G401 (cell line): ENCODE measurements at regions of chr1 and their contacts with region 1.

Region 1: DNA sequence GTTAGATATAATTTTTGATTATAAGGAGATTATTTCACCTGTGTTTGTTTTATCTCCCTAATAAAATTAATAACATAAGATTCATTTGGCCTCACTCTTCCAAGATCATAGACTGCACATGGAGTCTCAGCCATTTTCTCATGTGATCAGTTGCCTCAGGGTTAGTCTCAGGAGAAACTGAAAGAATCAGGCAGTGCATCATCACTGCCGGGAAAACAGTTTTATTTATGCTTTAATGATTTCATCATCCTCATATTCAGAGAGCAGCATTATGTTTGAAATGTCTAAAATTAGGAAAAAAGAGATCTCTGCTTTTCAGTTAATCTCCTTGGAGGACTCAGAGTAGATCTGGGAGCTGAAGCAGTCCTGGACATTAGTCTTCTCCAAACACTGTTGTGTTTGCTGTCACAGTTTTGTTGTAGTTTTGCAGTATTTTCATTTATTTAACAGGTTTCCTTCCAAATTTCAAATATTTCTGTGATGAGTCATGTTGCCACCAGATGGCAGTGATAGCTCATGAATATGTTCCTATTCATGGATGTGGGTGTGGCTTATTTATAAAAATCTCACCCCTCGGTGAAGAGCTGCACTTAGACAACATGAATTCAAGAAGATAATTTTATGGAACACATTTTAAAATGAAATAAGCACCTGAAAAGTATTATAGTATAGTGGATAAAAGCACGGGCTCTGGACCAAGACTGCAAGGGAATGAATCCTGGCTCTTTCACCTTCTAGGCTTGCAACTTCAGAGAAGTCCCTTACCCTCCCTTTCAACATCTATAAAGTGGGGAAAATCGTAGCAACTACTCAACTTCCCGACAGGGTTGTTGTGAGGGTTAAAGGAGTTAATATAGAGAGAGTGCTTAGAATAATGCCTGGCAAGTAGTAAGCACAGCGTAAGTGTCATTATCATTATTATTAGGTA is 31.2 kb downstream of the CHD1L start:
- DNase-seq: peak; percentile 69

Region 2: DNA sequence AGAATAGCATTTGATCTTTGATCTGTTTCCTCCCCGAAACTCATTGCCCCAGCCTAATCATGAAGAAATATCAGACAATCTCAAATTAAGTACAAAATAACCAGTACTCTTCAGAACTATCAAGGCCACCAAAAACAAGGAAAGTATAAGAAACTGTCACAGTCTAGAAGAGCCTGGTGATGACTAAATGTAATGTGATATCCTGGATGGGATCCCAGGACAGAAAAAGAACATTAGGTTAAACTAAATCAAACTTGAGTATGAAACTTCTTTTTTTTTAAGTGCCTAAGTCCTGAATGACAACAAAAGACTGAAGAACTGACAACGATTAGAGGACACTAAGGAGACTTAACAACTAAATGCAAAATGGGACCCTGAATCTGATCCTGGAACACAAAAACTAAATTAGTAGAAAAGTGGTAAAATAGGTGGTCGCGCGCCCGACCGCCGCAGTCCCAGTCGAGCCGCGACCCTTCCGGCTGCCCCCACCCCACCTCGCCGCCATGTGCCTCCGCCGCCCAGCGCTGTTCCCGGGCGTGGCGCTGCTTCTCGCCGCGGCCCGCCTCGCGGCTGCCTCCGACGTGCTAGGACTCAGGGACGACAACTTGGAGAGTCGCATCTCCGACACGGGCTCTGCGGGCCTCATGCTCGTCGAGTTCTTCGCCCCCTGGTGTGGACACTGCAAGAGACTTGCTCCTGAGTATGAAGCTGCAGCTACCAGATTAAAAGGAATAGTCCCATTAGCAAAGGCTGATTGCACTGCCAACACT is 95.9 kb before region 1 on chr1:
- in situ Hi-C with region 1: no loop called
- DNase-seq: no peak

Region 3: DNA sequence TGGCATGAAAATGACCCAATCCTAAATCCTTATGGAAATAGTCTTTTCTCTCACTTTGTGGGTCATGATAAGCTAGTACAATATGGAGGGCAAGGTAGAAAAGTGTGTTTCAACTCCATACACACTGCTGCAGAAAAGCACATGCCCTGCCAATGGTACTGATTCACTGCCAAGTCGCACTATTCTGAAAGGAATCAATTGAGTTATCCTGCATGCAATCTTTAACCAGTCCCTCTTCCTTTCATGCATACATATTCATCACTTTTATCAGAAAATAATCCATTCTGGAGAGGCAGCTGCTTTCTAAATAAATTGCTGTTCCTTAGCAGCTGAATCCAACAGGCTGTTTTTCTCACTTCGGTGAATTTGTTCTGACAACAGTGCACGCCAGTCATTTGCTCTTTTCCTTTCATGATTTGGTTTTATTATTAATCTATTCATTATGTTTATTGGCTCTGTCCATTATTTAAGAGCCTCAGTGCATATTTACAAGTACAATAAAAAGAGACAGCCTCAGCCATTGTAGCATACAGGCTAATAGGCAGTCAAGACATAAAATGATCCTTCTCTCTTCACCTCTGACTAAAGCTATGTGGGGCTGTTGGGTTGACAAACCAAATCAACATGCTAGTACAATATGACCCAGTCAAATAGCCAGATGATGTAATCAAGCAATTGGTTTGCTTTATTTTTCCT is 77.6 kb after region 1 on chr1:
- in situ Hi-C with region 1: loop called (anchors 10 kb)
- DNase-seq: no peak